CD8-positive, alpha-beta T cell (primary cell): ENCODE measurements at regions of chr11 and their contacts with region 1.

Region 1: GRCh38 chr11:67401495-67402191 is at the start of gene PPP1CA:
- DNase-seq: peak; percentile 86 to 98 (median 92)
- ATAC-seq: peak; percentile 78
- H3K4me3 ChIP-seq: peak within 1 kb of the TSS; percentile 88 to 98
- H3K4me3 Mint-ChIP-seq: peak within 1 kb of the TSS; percentile 95
- H3K27ac ChIP-seq: peak within 1 kb of the TSS; percentile 75 to 79
- H3K27ac Mint-ChIP-seq: peak within 1 kb of the TSS; percentile 85
- H3K4me1 ChIP-seq: peaks cover 75% of the 10 kb centered on the region
- H3K4me1 Mint-ChIP-seq: peaks cover 65% of the 10 kb centered on the region
- H3K27me3 ChIP-seq: no peaks in the 10 kb centered on the region
- H3K27me3 Mint-ChIP-seq: no peaks in the 10 kb centered on the region
- CTCF ChIP-seq: peak; percentile 52
- total RNA-seq, gene PPP1CA: 40.5 to 42.2 TPM

Region 2: GRCh38 chr11:67288452-67289225 is 113.0 kb before region 1 on chr11:
- CTCF ChIA-PET with region 1: interaction called, 4 read pairs
- POLR2A ChIA-PET with region 1: no interaction called
- intact Hi-C with region 1: loop called in 1 of 2 experiments (anchors 2 kb)
- DNase-seq: peak; percentile 78 to 97 (median 92)
- ATAC-seq: peak; percentile 67
- H3K4me3 ChIP-seq: peak overlapping the region; percentile 90 to 92
- H3K4me3 Mint-ChIP-seq: peak overlapping the region; percentile 80
- H3K27ac ChIP-seq: peak overlapping the region; percentile 79 to 98
- H3K27ac Mint-ChIP-seq: peak overlapping the region; percentile 98
- H3K4me1 ChIP-seq: peaks cover 64% of the 10 kb centered on the region
- H3K4me1 Mint-ChIP-seq: peaks cover 59% of the 10 kb centered on the region
- H3K27me3 ChIP-seq: no peaks in the 10 kb centered on the region
- H3K27me3 Mint-ChIP-seq: no peaks in the 10 kb centered on the region
- CTCF ChIP-seq: peak; percentile 58

Region 3: GRCh38 chr11:67391304-67392132 is 10.1 kb before region 1 on chr11 and contains the start of gene RAD9A:
- CTCF ChIA-PET with region 1: interaction called, 12 read pairs
- POLR2A ChIA-PET with region 1: interaction called, 33 read pairs
- intact Hi-C with region 1: loop called in 1 of 2 experiments (anchors 1 kb)
- DNase-seq: peak; percentile 81 to 97 (median 93)
- ATAC-seq: peak; percentile 77
- H3K4me3 ChIP-seq: peak within 1 kb of the TSS; percentile 77 to 85
- H3K4me3 Mint-ChIP-seq: peak within 1 kb of the TSS; percentile 87
- H3K27ac ChIP-seq: peak within 1 kb of the TSS; percentile 62 to 87
- H3K27ac Mint-ChIP-seq: peak within 1 kb of the TSS; percentile 81
- H3K4me1 ChIP-seq: peaks cover 26% of the 10 kb centered on the region
- H3K4me1 Mint-ChIP-seq: peaks cover 35% of the 10 kb centered on the region
- H3K27me3 ChIP-seq: no peaks in the 10 kb centered on the region
- H3K27me3 Mint-ChIP-seq: no peaks in the 10 kb centered on the region
- CTCF ChIP-seq: no peak
- total RNA-seq, gene RAD9A: 13.7 to 14.1 TPM

Region 4: GRCh38 chr11:67428052-67428914 is 26.6 kb after region 1 on chr11 and contains the start of gene RPS6KB2:
- CTCF ChIA-PET with region 1: interaction called, 11 read pairs
- POLR2A ChIA-PET with region 1: interaction called, 275 read pairs
- intact Hi-C with region 1: loop called (anchors 2 kb)
- DNase-seq: peak; percentile 97 to 100 (median 98)
- ATAC-seq: peak; percentile 89
- H3K4me3 ChIP-seq: peak within 1 kb of the TSS; percentile 67 to 73
- H3K4me3 Mint-ChIP-seq: peak within 1 kb of the TSS; percentile 99
- H3K27ac ChIP-seq: peak within 1 kb of the TSS; percentile 86 to 87
- H3K27ac Mint-ChIP-seq: peak within 1 kb of the TSS; percentile 95
- H3K4me1 ChIP-seq: peaks cover 34% of the 10 kb centered on the region
- H3K4me1 Mint-ChIP-seq: peaks cover 41% of the 10 kb centered on the region
- H3K27me3 ChIP-seq: no peaks in the 10 kb centered on the region
- H3K27me3 Mint-ChIP-seq: no peaks in the 10 kb centered on the region
- CTCF ChIP-seq: no peak
- total RNA-seq, gene RPS6KB2: 71.8 to 76.2 TPM

Region 5: GRCh38 chr11:67468835-67469811 is 67.5 kb after region 1 on chr11 and contains the start of gene TMEM134:
- CTCF ChIA-PET with region 1: interaction called, 10 read pairs
- POLR2A ChIA-PET with region 1: interaction called, 30 read pairs
- intact Hi-C with region 1: loop called (anchors 1 kb)
- DNase-seq: peak; percentile 86 to 97 (median 91)
- ATAC-seq: peak; percentile 81
- H3K4me3 ChIP-seq: peak within 1 kb of the TSS; percentile 80 to 89
- H3K4me3 Mint-ChIP-seq: peak within 1 kb of the TSS; percentile 89
- H3K27ac ChIP-seq: peak within 1 kb of the TSS; percentile 78 to 82
- H3K27ac Mint-ChIP-seq: peak within 1 kb of the TSS; percentile 93
- H3K4me1 ChIP-seq: peaks cover 39% of the 10 kb centered on the region
- H3K4me1 Mint-ChIP-seq: peaks cover 37% of the 10 kb centered on the region
- H3K27me3 ChIP-seq: no peaks in the 10 kb centered on the region
- H3K27me3 Mint-ChIP-seq: no peaks in the 10 kb centered on the region
- CTCF ChIP-seq: peak; percentile 43
- total RNA-seq, gene TMEM134: 41.2 to 48.5 TPM

Region 6: GRCh38 chr11:67606492-67607201 is 205.0 kb after region 1 on chr11 and contains the start of gene NDUFV1:
- CTCF ChIA-PET with region 1: no interaction called
- POLR2A ChIA-PET with region 1: no interaction called
- intact Hi-C with region 1: loop called (anchors 5 to 10 kb)
- DNase-seq: peak; percentile 92 to 98 (median 96)
- ATAC-seq: peak; percentile 99
- H3K4me3 ChIP-seq: peak within 1 kb of the TSS; percentile 69
- H3K4me3 Mint-ChIP-seq: peak within 1 kb of the TSS; percentile 91
- H3K27ac ChIP-seq: peak within 1 kb of the TSS; percentile 69 to 71
- H3K27ac Mint-ChIP-seq: peak within 1 kb of the TSS; percentile 89
- H3K4me1 ChIP-seq: peaks cover 21% of the 10 kb centered on the region
- H3K4me1 Mint-ChIP-seq: peaks cover 20% of the 10 kb centered on the region
- H3K27me3 ChIP-seq: no peaks in the 10 kb centered on the region
- H3K27me3 Mint-ChIP-seq: peaks cover 8% of the 10 kb centered on the region
- CTCF ChIP-seq: peak; percentile 59
- total RNA-seq, gene NDUFV1: 220 to 237 TPM